Naive thymus-derived CD4-positive, alpha-beta T cell (primary cell): ENCODE measurements at regions of chr3 and their contacts with region 1.

Region 1: DNA sequence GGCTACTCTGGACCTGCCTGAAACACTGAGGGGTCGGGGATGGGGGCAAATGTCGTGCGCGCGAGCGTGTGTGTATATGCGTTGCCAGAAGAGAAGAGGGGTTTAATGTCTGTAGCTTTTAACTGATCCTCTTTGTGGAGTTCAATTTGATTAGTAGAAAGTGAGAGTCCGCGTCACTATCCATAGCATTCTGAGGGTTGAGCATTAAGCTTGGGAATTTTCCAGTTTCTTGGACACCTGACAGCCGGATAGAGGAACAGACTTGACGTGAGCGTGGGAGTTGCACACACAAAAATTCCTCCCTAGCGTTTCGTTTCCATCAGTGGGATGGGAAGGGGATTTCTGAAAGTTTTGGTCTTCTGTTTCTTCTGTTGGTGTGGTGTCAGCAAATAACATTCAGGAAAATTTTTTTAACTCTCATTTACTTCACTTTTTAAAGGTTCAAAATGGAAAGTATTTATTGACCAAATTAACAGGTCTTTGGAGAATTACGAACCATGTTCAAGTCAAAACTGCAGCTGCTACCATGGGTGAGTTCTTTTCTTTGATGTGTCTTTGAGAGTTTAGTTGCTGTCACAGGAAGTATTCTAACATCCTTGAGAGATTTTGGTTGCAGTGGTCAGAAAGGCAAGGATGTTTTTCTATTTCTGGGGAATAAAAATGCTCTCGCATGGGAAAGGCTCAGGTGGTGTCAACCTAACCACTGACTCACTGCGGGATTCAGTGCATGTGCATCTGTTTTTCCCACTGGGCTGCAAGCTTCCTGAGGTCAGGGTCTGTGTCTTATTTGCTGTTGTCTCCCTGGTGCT is 822 bp downstream of the POGLUT1 start:
- DNase-seq: peak in 7 of 9 donors; percentile 10 to 32 (median 24)
- ATAC-seq: peak; percentile 48
- H3K4me3 ChIP-seq: peak overlapping the region; percentile 86
- H3K4me3 Mint-ChIP-seq: peak overlapping the region; percentile 90 to 97 (median 94)
- H3K27ac ChIP-seq: peak overlapping the region; percentile 88
- H3K27ac Mint-ChIP-seq: peak overlapping the region; percentile 83 to 95 (median 89)
- H3K4me1 ChIP-seq: peaks cover 12% of the 10 kb centered on the region in 2 donors
- H3K4me1 Mint-ChIP-seq: peaks cover 27 to 35% (median 30%) of the 10 kb centered on the region in 7 donors
- H3K27me3 ChIP-seq: no peaks in the 10 kb centered on the region
- H3K27me3 Mint-ChIP-seq: no peaks in the 10 kb centered on the region

Region 2: GRCh38 chr3:119279101-119279554 is 190.5 kb before region 1 on chr3:
- CTCF ChIA-PET with region 1: no interaction called
- POLR2A ChIA-PET with region 1: no interaction called
- intact Hi-C with region 1: loop called in 1 of 2 experiments (anchors 5 kb)
- DNase-seq: no peak
- ATAC-seq: no peak
- H3K4me3 ChIP-seq: no peak overlapping the region
- H3K4me3 Mint-ChIP-seq: no peak overlapping the region
- H3K27ac ChIP-seq: no peak overlapping the region
- H3K27ac Mint-ChIP-seq: no peak overlapping the region
- H3K4me1 ChIP-seq: peaks cover 0 to 7% of the 10 kb centered on the region in 2 donors
- H3K4me1 Mint-ChIP-seq: peaks cover 0 to 23% (median 11%) of the 10 kb centered on the region in 7 donors
- H3K27me3 ChIP-seq: no peaks in the 10 kb centered on the region
- H3K27me3 Mint-ChIP-seq: no peaks in the 10 kb centered on the region

Region 3: GRCh38 chr3:119293871-119294695 is 175.5 kb before region 1 on chr3 and contains the start of gene ARHGAP31:
- CTCF ChIA-PET with region 1: no interaction called
- POLR2A ChIA-PET with region 1: interaction called, 5 read pairs
- intact Hi-C with region 1: loop called (anchors 1 to 2 kb)
- DNase-seq: peak; percentile 70 to 91 (median 86)
- ATAC-seq: peak; percentile 77
- H3K4me3 ChIP-seq: peak within 1 kb of the TSS; percentile 50
- H3K4me3 Mint-ChIP-seq: peak within 1 kb of the TSS; percentile 68 to 95 (median 90)
- H3K27ac ChIP-seq: peak within 1 kb of the TSS; percentile 91
- H3K27ac Mint-ChIP-seq: peak within 1 kb of the TSS; percentile 71 to 99 (median 92)
- H3K4me1 ChIP-seq: peaks cover 22 to 26% of the 10 kb centered on the region in 2 donors
- H3K4me1 Mint-ChIP-seq: peaks cover 26 to 74% (median 63%) of the 10 kb centered on the region in 7 donors
- H3K27me3 ChIP-seq: no peaks in the 10 kb centered on the region
- H3K27me3 Mint-ChIP-seq: peaks cover 0 to 43% (median 0%) of the 10 kb centered on the region in 5 donors
- total RNA-seq, gene ARHGAP31: 3.0 to 11.9 (median 3.1) TPM

Region 4: GRCh38 chr3:119322835-119323722 is 146.5 kb before region 1 on chr3:
- CTCF ChIA-PET with region 1: no interaction called
- POLR2A ChIA-PET with region 1: no interaction called
- intact Hi-C with region 1: loop called in 1 of 2 experiments (anchors 1 kb)
- DNase-seq: peak; percentile 77 to 96 (median 81)
- ATAC-seq: peak; percentile 90
- H3K4me3 ChIP-seq: peak overlapping the region; percentile 65
- H3K4me3 Mint-ChIP-seq: peak overlapping the region; percentile 84 to 96 (median 90)
- H3K27ac ChIP-seq: peak overlapping the region; percentile 81
- H3K27ac Mint-ChIP-seq: peak overlapping the region; percentile 90 to 99 (median 95)
- H3K4me1 ChIP-seq: peaks cover 10 to 14% of the 10 kb centered on the region in 2 donors
- H3K4me1 Mint-ChIP-seq: peaks cover 12 to 30% (median 21%) of the 10 kb centered on the region in 7 donors
- H3K27me3 ChIP-seq: no peaks in the 10 kb centered on the region
- H3K27me3 Mint-ChIP-seq: peaks cover 0 to 57% (median 0%) of the 10 kb centered on the region in 5 donors

Region 5: GRCh38 chr3:119559441-119559963 is 89.9 kb after region 1 on chr3 and contains the start of gene CD80:
- CTCF ChIA-PET with region 1: no interaction called
- POLR2A ChIA-PET with region 1: no interaction called
- intact Hi-C with region 1: loop called in 1 of 2 experiments (anchors 1 kb)
- DNase-seq: peak in 7 of 9 donors; percentile 14 to 63 (median 33)
- ATAC-seq: peak; percentile 76
- H3K4me3 ChIP-seq: no peak within 1 kb of the TSS
- H3K4me3 Mint-ChIP-seq: peak within 1 kb of the TSS in 2 of 10 donors; percentile 12 to 81
- H3K27ac ChIP-seq: no peak within 1 kb of the TSS
- H3K27ac Mint-ChIP-seq: peak within 1 kb of the TSS in 2 of 9 donors; percentile 68 to 71
- H3K4me1 ChIP-seq: peaks cover 0 to 6% of the 10 kb centered on the region in 2 donors
- H3K4me1 Mint-ChIP-seq: peaks cover 0 to 64% (median 8%) of the 10 kb centered on the region in 7 donors
- H3K27me3 ChIP-seq: no peaks in the 10 kb centered on the region
- H3K27me3 Mint-ChIP-seq: peaks cover 0 to 5% (median 0%) of the 10 kb centered on the region in 5 donors
- total RNA-seq, gene CD80: 0.13 to 15.1 (median 1.2) TPM in 3 of 5 experiments, not detected in the others

Region 6: DNA sequence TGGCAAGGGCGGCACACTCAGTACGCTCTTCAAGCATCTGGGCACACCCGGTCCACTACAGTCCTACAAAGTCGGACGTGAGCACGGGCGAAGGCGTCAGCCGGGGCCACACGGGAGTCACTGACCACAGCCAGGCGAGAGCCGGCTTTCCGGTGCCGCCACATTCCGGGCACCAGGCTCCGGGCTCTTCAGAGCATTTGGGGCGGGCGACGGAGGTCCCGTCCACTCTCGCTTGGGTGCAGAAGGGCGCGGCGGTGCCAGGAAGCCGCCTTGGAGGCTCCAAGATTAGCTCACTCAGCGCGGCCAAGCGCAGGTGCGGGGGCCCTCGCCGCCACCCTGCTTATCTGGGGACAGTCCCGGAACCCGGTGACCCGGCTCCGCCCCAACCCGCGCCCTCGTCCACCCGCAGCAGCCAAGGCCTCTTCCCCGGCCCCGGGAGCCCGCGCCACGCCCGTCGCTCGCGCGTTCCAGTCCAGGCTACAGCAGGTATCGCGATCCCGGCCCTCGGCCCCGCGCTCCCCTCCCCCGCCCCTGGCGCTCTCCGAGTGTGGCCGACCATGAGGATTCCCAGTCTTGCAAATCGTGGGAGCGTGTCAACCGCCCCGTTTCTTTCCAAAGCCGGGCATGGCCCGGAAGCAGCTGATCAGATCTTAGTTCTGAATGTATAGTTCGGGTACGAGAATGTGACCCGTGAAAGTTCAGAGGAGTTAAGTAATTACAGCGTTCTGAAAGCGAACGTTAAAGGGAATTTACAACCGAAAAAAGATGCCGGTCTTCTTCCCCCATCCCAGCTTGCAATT is 110.0 kb after region 1 on chr3 and contains the start of gene ADPRH:
- CTCF ChIA-PET with region 1: no interaction called
- POLR2A ChIA-PET with region 1: no interaction called
- intact Hi-C with region 1: loop called in 1 of 2 experiments (anchors 5 kb)
- DNase-seq: peak in 8 of 9 donors; percentile 3 to 75 (median 16)
- ATAC-seq: peak; percentile 84
- H3K4me3 ChIP-seq: peak within 1 kb of the TSS; percentile 61
- H3K4me3 Mint-ChIP-seq: peak within 1 kb of the TSS; percentile 86 to 98 (median 95)
- H3K27ac ChIP-seq: no peak within 1 kb of the TSS
- H3K27ac Mint-ChIP-seq: peak within 1 kb of the TSS; percentile 10 to 84 (median 57)
- H3K4me1 ChIP-seq: peaks cover 0 to 4% of the 10 kb centered on the region in 2 donors
- H3K4me1 Mint-ChIP-seq: peaks cover 0 to 22% (median 14%) of the 10 kb centered on the region in 7 donors
- H3K27me3 ChIP-seq: no peaks in the 10 kb centered on the region
- H3K27me3 Mint-ChIP-seq: peaks cover 4 to 12% (median 7%) of the 10 kb centered on the region in 5 donors
- total RNA-seq, gene ADPRH: 0.38 to 6.9 (median 1.3) TPM

Region 7: DNA sequence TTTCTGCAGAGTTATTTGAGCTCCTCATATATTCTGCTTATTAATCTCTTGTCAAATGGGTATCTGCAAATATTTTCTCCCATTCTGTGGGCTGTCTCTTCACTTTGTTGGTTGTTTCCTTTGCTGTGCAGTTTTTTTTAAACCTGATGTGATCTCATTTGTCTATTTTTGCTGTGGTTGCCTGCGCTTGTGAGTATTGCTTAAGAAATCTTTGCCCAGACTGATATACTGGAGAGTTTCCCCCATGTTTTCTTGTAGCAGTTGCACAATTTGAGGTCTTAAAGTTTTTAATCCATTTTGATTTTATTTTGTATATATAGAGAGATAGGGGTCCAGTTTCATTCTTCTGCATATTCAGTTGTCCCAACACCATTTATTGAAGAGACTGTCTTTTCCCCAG is 1973.9 kb after region 1 on chr3:
- CTCF ChIA-PET with region 1: no interaction called
- POLR2A ChIA-PET with region 1: no interaction called
- intact Hi-C with region 1: no loop called
- DNase-seq: no peak
- ATAC-seq: no peak
- H3K4me3 ChIP-seq: no peak overlapping the region
- H3K4me3 Mint-ChIP-seq: no peak overlapping the region
- H3K27ac ChIP-seq: no peak overlapping the region
- H3K27ac Mint-ChIP-seq: no peak overlapping the region
- H3K4me1 ChIP-seq: no peaks in the 10 kb centered on the region
- H3K4me1 Mint-ChIP-seq: no peaks in the 10 kb centered on the region
- H3K27me3 ChIP-seq: no peaks in the 10 kb centered on the region
- H3K27me3 Mint-ChIP-seq: peaks cover 0 to 4% (median 0%) of the 10 kb centered on the region in 5 donors